Activated naive CD4-positive, alpha-beta T cell treated with anti-CD3 and anti-CD28 coated beads, Interleukin-2, amount 10 ng/mL, durations not matched to agents 7 days and 5 days (primary cell): ENCODE measurements at regions of chr6 and their contacts with region 1.

Region 1: DNA sequence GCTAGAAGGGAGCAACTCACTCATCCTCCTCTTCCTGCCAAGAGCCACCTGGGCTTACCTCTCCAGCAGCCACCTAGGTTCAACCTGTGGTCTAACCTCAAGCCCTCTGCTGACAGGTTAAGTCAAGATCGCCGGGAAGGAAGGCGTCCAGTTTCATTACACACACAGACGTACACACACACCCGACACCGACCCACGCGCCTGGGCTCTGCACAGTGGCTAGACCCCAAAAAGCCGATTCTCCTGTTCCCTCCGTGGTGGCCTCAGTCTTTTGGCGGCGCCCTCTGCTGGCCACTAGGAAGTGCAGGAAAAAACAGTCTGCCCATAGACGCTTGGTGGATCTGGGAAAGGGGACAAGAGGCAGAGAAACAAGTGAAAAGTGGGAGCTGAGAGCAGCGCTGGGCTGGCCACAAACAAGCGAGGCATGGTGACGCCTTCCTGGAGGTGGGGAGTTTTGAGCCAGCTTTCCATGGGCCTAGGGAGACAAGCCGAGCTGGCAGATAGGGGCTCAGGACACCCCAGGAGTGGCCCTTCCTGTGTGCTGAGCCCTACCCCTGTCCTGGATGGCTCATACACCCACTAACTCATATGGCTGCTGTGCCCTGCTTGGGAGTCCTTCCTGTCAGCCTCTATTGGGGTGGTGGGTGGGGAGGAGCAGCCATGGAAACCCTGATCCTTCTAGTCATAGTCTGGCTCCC is 52.7 kb downstream of the MRPL14 start:
- DNase-seq: peak; percentile 82
- H3K4me3 Mint-ChIP-seq: peak overlapping the region; percentile 84
- H3K27ac Mint-ChIP-seq: peak overlapping the region; percentile 42
- H3K4me1 Mint-ChIP-seq: peaks cover 30% of the 10 kb centered on the region
- H3K27me3 Mint-ChIP-seq: peaks cover 70% of the 10 kb centered on the region

Region 2: GRCh38 chr6:43608310-43608763 is 466.3 kb before region 1 on chr6:
- CTCF ChIA-PET with region 1: interaction called, 11 read pairs
- DNase-seq: peak; percentile 76
- H3K4me3 Mint-ChIP-seq: no peak overlapping the region
- H3K27ac Mint-ChIP-seq: peak overlapping the region; percentile 6
- H3K4me1 Mint-ChIP-seq: peaks cover 5% of the 10 kb centered on the region
- H3K27me3 Mint-ChIP-seq: no peaks in the 10 kb centered on the region

Region 3: DNA sequence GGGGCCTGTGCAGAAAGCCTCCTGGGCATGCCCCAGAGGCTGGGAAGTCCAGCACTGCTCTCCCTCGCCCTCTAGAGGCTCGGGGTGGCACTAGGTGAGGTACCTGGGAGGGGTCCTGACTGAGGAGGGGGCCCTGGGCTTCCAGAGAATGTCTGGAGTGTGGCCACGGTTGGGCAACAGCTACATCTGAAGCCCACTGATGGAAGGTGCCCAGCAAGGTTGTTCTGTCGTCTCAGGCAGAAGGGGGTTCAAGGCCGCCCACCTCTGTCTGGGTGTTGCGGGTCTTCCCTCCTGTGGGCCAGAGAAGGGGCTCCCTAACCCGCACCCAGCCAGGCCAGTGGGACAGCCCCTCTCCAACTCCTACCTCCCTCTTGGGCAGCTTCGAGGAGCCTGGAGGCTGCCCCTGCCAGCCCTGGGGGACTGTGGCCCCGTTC is 316.0 kb before region 1 on chr6:
- CTCF ChIA-PET with region 1: interaction called, 13 read pairs
- DNase-seq: peak; percentile 47
- H3K4me3 Mint-ChIP-seq: no peak overlapping the region
- H3K27ac Mint-ChIP-seq: no peak overlapping the region
- H3K4me1 Mint-ChIP-seq: peaks cover 2% of the 10 kb centered on the region
- H3K27me3 Mint-ChIP-seq: peaks cover 53% of the 10 kb centered on the region

Region 4: DNA sequence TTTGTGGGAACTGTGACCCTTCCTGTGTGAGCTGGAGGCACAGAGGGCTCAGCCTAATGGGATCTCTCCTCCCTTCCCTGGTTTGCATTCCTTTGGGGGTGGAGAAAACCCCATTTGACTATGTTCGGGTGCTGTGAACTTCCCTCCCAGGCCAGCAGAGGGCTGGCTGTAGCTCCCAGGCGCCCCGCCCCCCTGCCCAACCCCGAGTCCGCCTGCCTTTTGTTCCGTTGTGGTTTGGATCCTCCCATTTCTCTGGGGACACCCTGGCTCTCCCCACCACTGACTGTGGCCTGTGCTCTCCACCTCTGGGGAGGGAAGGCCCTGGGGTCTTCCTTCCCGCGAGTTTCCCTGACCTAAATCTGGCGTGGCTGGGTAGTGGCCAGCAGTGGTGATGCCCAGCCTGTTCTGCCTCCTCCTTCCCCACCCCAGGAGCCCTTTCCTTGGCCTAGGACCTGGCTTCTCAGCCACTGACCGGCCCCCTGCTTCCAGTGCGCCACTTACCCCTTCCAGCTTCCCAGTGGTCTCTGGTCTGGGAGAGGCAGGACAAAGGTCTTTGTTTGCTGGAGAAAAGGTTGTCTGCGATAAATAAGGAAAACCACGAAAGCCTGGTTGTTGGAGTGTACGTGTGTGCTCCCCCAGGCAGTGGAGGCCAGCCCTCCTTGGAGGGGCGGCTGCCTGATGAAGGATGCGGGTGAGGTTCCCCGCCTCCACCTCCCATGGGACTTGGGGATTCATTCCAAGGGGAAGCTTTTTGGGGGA is 299.6 kb before region 1 on chr6:
- CTCF ChIA-PET with region 1: interaction called, 69 read pairs
- DNase-seq: peak; percentile 79
- H3K4me3 Mint-ChIP-seq: peak overlapping the region; percentile 38
- H3K27ac Mint-ChIP-seq: peak overlapping the region; percentile 74
- H3K4me1 Mint-ChIP-seq: peaks cover 49% of the 10 kb centered on the region
- H3K27me3 Mint-ChIP-seq: peaks cover 7% of the 10 kb centered on the region

Region 5: GRCh38 chr6:43964659-43965570 is 109.7 kb before region 1 on chr6:
- CTCF ChIA-PET with region 1: no interaction called
- DNase-seq: no peak
- H3K4me3 Mint-ChIP-seq: no peak overlapping the region
- H3K27ac Mint-ChIP-seq: no peak overlapping the region
- H3K4me1 Mint-ChIP-seq: no peaks in the 10 kb centered on the region
- H3K27me3 Mint-ChIP-seq: peaks cover 39% of the 10 kb centered on the region

Region 6: GRCh38 chr6:44041461-44042260 is 32.9 kb before region 1 on chr6:
- CTCF ChIA-PET with region 1: no interaction called
- DNase-seq: no peak
- H3K4me3 Mint-ChIP-seq: no peak overlapping the region
- H3K27ac Mint-ChIP-seq: no peak overlapping the region
- H3K4me1 Mint-ChIP-seq: peaks cover 7% of the 10 kb centered on the region
- H3K27me3 Mint-ChIP-seq: peaks cover 3% of the 10 kb centered on the region

Region 7: DNA sequence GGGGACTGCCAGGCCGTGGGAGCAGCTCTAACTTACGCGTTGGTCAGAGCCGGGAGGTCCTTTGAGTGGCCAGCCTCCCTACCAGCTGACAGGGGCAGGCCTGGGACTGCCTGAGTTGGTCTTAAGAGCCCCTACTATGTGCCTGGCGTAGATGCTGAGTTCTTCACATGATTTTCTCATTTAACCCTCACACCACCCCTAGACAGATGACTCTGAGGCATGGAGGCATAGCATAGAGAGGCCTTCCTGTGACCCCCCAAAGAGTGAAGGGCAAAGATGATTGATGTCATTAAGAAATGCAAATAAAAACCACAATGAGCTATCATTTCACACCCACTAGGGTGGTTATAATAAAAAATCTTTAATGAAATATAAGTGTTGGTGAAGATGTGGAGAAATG is 15.9 kb after region 1 on chr6:
- CTCF ChIA-PET with region 1: interaction called, 12 read pairs
- DNase-seq: no peak
- H3K4me3 Mint-ChIP-seq: no peak overlapping the region
- H3K27ac Mint-ChIP-seq: no peak overlapping the region
- H3K4me1 Mint-ChIP-seq: no peaks in the 10 kb centered on the region
- H3K27me3 Mint-ChIP-seq: no peaks in the 10 kb centered on the region

Region 8: GRCh38 chr6:44105993-44106740 is 31.6 kb after region 1 on chr6:
- CTCF ChIA-PET with region 1: no interaction called
- DNase-seq: no peak
- H3K4me3 Mint-ChIP-seq: no peak overlapping the region
- H3K27ac Mint-ChIP-seq: no peak overlapping the region
- H3K4me1 Mint-ChIP-seq: peaks cover 14% of the 10 kb centered on the region
- H3K27me3 Mint-ChIP-seq: no peaks in the 10 kb centered on the region